ENCODE measurements at regions of chr21 and their contacts with region 1.

Region 1: GRCh38 chr21:15667010-15667409 is 62.8 kb upstream of the USP25 start:
- DNase-seq: no peak
- H3K4me3 ChIP-seq: no peak overlapping the region
- H3K4me3 Mint-ChIP-seq: no peak overlapping the region
- H3K27ac Mint-ChIP-seq: no peak overlapping the region
- H3K4me1 ChIP-seq: peaks cover 5% of the 10 kb centered on the region; the same call in 1 of the 2 replicates
- H3K4me1 Mint-ChIP-seq: peaks cover 7% of the 10 kb centered on the region
- H3K27me3 ChIP-seq: no peaks in the 10 kb centered on the region
- H3K27me3 Mint-ChIP-seq: no peaks in the 10 kb centered on the region
- CTCF ChIP-seq: no peak

Region 2: DNA sequence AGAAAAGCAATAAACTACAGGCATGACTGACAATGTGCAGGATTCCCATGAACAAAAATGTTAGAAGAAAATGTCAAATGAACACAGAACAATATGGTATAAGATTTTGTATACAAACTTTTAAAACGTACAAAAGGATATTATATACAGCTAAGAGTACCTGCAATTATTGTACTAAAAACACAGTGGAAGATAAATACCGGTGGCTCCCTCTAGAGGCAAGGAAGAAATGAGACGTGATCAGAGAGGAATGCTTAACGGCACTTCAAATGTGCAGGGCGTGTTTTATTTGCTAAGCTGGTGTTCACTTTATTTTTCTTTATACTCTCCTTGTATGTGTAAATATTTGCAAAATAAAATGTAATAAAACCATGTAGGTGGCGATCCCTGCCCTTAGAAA is 929.1 kb before region 1 on chr21:
- CTCF ChIA-PET with region 1: no interaction called
- POLR2A ChIA-PET with region 1: no interaction called
- intact Hi-C with region 1: no loop called
- DNase-seq: peak; percentile 50 to 58
- H3K4me3 ChIP-seq: no peak overlapping the region
- H3K4me3 Mint-ChIP-seq: no peak overlapping the region
- H3K27ac Mint-ChIP-seq: no peak overlapping the region
- H3K4me1 ChIP-seq: no peaks in the 10 kb centered on the region
- H3K4me1 Mint-ChIP-seq: no peaks in the 10 kb centered on the region
- H3K27me3 ChIP-seq: no peaks in the 10 kb centered on the region; the same call in 1 of the 2 replicates
- H3K27me3 Mint-ChIP-seq: no peaks in the 10 kb centered on the region
- CTCF ChIP-seq: peak; percentile 38 to 61

Region 3: DNA sequence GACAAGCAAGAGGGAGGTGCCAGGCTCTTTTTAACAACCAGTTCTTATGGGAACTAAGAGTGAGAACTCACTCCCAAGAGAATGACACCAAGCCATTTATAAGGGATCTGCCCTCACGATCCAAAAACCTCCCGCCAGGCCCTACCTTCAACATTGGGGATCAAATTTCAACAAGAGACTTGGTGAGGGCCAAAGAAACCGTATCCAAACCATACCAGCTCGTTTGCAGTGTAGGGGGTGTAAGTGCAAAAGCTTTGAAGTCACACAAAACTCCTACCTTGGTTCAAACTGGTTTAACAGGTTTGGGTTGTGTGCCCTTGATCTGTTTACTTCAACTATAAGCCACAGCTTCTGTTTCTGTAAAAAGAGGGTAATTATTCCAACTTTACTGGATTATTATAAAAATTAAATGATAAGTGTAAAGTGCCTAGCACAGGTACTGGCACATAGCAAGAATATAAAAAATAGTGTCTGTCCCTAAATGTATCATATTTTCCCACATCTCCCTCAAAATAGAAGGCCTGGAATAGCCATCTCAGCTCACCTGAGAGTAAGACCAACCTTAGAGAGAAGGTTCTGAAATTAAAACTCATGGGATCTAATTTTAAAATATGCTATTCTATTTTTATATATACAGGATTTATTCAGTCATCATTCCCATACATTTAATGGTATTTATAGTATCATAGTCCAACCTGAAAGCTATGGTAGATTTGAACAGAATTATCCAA is 55.7 kb after region 1 on chr21:
- CTCF ChIA-PET with region 1: no interaction called
- POLR2A ChIA-PET with region 1: no interaction called
- intact Hi-C with region 1: no loop called
- DNase-seq: peak; percentile 36 to 46
- H3K4me3 ChIP-seq: no peak overlapping the region
- H3K4me3 Mint-ChIP-seq: peak overlapping the region; percentile 42
- H3K27ac Mint-ChIP-seq: peak overlapping the region; percentile 81
- H3K4me1 ChIP-seq: peaks cover 17% of the 10 kb centered on the region
- H3K4me1 Mint-ChIP-seq: peaks cover 14% of the 10 kb centered on the region
- H3K27me3 ChIP-seq: no peaks in the 10 kb centered on the region
- H3K27me3 Mint-ChIP-seq: no peaks in the 10 kb centered on the region
- CTCF ChIP-seq: no peak

Region 4: DNA sequence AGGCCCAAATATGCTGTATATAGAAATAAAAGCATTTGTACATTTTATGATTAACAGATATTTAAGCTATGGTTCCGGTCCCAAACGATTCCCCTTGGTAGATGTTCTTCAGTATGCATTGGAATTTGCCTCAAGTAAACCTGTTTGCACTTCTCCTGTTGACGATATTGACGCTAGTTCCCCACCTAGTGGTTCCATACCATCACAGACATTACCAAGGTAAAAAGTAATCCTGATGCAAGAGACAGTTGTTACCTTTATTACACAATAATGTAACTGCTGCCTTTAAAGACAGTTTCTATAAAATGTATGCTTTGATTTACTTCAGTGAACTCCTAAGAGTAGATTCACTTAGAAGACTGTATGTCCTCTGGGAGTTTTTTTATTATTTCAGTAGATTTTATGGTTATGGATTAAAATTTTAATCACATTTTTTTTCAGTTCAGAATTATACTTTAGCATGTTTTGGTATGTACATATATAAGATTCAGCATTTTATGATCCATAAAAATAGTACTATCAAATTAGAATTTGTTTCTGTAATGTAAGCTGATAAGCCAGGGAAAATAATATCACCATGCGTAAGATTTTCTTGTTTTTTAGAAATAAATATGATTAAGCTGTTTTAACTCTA is 159.3 kb after region 1 on chr21:
- CTCF ChIA-PET with region 1: no interaction called
- POLR2A ChIA-PET with region 1: no interaction called
- intact Hi-C with region 1: loop called (anchors 5 kb)
- DNase-seq: peak; percentile 43 to 71
- H3K4me3 ChIP-seq: no peak overlapping the region
- H3K4me3 Mint-ChIP-seq: no peak overlapping the region
- H3K27ac Mint-ChIP-seq: no peak overlapping the region
- H3K4me1 ChIP-seq: no peaks in the 10 kb centered on the region
- H3K4me1 Mint-ChIP-seq: no peaks in the 10 kb centered on the region
- H3K27me3 ChIP-seq: no peaks in the 10 kb centered on the region
- H3K27me3 Mint-ChIP-seq: no peaks in the 10 kb centered on the region
- CTCF ChIP-seq: peak; percentile 63 to 76